IMR-90 (cell line): ENCODE measurements at regions of chr3 and their contacts with region 1.

Region 1: DNA sequence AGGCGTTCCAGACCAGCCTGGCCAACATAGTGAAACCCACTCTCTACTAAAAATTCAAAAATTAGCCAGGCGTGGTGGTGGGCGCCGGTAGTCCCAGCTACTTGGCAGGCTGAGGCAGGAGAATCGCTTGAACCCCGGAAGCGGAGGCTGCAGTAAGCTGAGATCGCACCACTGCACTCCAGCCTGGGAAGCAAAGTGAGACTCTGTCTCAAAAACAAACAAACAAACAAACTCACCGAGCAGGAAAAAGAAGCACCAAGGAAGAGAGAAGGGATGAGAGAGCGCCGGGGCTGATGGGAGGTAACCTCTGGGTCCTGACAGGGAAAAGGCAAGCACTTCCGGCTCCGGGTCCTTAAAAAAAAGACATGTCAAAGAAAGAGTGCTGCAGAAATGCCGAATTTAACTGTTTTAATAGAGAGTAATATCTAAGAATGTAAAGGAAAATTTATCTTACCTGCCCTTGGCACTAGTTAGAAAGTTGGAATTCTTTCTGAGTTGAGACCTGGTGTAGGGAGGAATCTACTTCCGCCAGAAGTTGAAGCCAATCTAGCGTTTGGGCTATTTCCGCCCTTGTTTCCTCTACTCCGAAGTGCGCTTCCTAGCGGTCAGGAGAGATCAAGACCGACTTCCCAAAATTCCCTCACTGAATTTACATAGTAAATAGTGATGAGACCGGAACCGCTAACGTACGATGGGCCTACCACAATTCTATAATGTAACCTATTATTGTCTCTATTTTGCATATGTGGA is 29.1 kb downstream of the EFCAB12 start:
- DNase-seq: peak; percentile 97
- ATAC-seq: peak; percentile 94
- H3K4me3 ChIP-seq: peak overlapping the region; percentile 80
- H3K27ac ChIP-seq: peak overlapping the region; percentile 89
- H3K4me1 ChIP-seq: peaks cover 1% of the 10 kb centered on the region; the same call in 1 of the 2 replicates
- H3K27me3 ChIP-seq: no peaks in the 10 kb centered on the region
- CTCF ChIP-seq: peak; percentile 81
- POLR2A ChIP-seq: no peak; the same call in none of the 2 replicates
- RAD21 ChIP-seq: peak; percentile 31

Region 2: DNA sequence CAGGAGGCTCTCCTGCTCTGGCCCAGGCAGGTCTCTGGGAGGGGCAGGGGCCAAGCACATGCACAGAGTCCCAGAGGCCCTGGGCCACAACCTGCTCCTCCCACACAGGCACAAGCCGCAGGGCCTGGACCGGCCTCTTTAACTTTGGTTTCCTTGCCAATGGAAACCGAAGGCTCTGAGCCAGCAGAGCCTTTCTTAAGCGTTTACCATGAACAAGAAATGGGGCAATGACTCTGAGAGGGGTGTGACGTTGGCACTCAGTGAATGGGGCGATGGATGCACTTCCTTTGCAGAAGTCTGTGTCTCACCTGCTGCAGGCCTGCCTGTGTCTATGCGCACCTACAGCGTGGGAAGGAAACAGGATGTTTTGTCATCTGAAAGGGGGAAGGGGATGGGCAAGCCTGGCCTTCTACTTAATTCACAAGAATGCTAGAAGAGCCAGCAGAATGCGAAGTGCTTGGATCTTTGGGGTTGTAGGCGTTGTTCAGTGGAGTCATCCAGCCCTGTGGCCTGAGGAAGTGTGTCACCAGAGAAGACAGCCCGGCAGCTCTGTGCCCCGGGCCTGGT is 82.5 kb after region 1 on chr3:
- CTCF ChIA-PET with region 1: no interaction called
- POLR2A ChIA-PET with region 1: no interaction called
- dilution Hi-C with region 1: no loop called
- in situ Hi-C with region 1: no loop called
- intact Hi-C with region 1: no loop called
- DNase-seq: no peak
- ATAC-seq: no peak
- H3K4me3 ChIP-seq: no peak overlapping the region
- H3K27ac ChIP-seq: no peak overlapping the region
- H3K4me1 ChIP-seq: peaks cover 17% of the 10 kb centered on the region
- H3K27me3 ChIP-seq: no peaks in the 10 kb centered on the region
- CTCF ChIP-seq: no peak
- POLR2A ChIP-seq: no peak
- RAD21 ChIP-seq: no peak

Region 3: DNA sequence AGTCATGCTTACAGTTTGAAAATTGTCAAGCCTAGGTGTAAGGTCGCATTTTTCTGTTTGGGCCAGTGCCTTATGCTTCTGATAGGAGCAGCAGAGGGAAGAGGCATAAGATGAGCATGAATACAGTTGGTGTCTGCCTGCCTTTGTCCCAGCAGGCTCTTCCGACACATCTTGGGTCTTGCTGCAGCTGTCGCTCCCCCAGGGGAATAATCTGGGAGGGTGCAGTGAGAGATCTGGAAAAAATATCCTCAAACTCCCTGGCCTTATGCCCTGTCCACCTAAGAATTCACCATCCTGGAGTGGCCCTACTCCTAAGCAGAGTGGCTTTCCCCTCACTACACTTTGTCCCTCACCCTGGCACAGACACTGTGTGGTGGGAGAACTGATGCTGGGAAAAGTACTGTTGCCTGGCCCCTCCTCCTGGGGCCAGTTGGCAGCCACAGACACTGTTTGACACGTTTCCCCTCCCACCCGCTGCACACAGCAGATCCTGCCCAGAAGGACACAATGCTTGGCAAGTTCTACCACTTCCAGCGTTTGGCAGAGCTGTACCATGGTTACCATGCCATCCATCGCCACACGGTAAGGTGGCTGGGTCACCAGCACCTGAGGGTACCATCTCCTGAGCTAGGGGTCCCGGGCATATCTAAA is 108.0 kb after region 1 on chr3:
- CTCF ChIA-PET with region 1: no interaction called
- POLR2A ChIA-PET with region 1: no interaction called
- dilution Hi-C with region 1: no loop called
- in situ Hi-C with region 1: no loop called
- intact Hi-C with region 1: no loop called
- DNase-seq: no peak
- ATAC-seq: no peak
- H3K4me3 ChIP-seq: no peak overlapping the region
- H3K27ac ChIP-seq: no peak overlapping the region
- H3K4me1 ChIP-seq: no peaks in the 10 kb centered on the region
- H3K27me3 ChIP-seq: no peaks in the 10 kb centered on the region
- CTCF ChIP-seq: no peak
- POLR2A ChIP-seq: no peak
- RAD21 ChIP-seq: no peak

Region 4: DNA sequence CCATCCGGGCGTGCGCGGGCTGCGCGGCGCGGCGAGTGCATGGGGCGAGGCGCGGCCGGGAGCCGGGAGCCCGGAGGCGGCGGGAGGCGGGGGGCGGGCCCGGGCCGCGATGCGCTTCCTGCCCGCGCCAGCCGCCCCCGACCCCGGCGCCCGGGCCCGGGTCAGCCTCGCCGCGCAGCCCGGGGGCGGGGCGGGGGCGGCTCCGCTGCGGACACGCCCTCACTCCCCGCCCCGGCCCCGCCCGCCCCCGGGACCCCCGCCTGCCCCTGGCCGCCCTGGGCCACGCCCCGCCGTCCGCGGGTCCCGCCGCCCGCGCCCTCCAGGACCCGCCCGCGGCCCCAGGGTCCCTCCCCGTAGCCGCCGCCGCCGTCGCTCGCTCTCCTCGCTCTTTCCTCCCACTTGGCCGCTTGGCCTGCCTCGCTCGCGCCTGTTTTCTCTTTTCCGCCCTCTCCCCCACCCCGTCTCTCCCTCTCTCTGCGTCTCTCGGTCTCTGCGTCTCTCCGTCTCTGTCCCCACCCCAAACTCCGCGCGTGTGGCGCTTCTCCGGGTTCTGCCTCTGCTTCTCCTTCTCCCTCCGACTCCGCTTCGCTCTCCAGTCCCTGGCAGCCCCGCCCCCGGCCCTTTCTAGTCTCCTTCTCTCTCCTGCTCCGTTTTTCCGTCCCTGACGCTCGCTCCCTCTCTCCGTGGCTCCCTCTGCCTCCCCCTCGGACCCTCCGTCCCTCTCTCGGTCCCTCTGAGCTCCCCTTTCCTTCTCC is 207.5 kb after region 1 on chr3 and contains the start of gene PLXND1:
- CTCF ChIA-PET with region 1: no interaction called
- POLR2A ChIA-PET with region 1: no interaction called
- dilution Hi-C with region 1: no loop called
- in situ Hi-C with region 1: loop called (anchors 25 kb)
- intact Hi-C with region 1: no loop called
- DNase-seq: peak; percentile 39
- ATAC-seq: peak; percentile 71
- H3K4me3 ChIP-seq: peak within 1 kb of the TSS; percentile 95
- H3K27ac ChIP-seq: peak within 1 kb of the TSS; percentile 81
- H3K4me1 ChIP-seq: peaks cover 30% of the 10 kb centered on the region
- H3K27me3 ChIP-seq: no peaks in the 10 kb centered on the region
- CTCF ChIP-seq: no peak
- POLR2A ChIP-seq: no peak
- RAD21 ChIP-seq: no peak
- total RNA-seq, gene PLXND1: 19.2 and 22.5 TPM in 2 replicates